Prostate gland (tissue), 2 donors: ENCODE measurements at regions of chr6 and their contacts with region 1.

Region 1: GRCh38 chr6:20291764-20292580 is 79.7 kb upstream of the MBOAT1 start:
- DNase-seq: peak; percentile 74
- H3K4me3 ChIP-seq: no peak overlapping the region
- H3K27ac ChIP-seq: no peak overlapping the region
- H3K4me1 ChIP-seq: no peaks in the 10 kb centered on the region
- H3K27me3 ChIP-seq: no peaks in the 10 kb centered on the region
- CTCF ChIP-seq: peak; percentile 79 to 88 (median 84)
- POLR2A ChIP-seq: no peak

Region 2: DNA sequence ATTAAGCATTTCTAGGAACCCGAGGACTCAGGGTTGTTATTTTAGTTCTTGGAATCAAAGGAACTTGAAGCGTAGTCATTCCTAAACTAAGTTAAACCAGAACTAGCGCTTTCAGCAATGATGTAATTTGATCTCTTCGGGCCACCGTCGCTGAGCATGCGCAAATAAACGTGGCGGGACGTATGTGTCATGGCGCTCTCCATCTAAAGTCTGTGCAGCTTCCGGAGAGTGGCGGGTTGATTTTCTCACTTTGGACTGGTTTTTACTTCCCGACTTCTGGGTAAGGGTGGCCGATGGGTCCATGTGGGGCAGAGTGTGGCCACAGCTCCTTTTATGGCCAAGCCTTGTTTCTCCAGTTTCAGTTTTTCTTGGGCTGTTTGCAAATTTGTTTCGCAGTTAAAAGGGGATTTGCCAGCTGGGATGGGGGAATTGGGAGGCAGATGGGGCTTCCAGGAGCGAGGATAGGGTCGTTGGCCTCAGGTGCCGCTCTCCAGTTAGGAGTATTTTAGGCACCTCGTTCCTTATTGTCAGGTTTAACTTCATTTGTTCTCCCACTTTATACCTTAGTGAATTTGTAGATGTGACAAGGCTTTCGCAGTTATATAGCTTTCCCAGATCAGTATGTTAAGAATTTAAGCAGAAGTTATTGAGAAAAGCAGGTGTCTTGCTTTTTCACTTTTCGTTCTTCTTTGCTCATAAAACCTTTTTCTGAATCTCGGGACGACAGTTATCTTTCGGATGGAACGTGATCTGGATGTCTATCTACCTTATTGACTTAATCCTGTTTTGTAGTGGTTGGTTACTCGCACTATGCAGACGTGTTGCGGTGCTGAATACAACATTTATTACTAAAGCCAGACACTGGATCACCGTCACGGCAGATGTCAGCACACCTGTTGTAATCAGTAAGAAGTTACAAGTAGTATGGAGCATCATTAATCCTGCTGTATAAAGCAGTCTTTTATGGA is 242.6 kb after region 1 on chr6 and contains the start of gene CDKAL1:
- intact Hi-C with region 1: loop called (anchors 2 kb)
- DNase-seq: peak; percentile 87
- H3K4me3 ChIP-seq: peak within 1 kb of the TSS; percentile 61 to 80
- H3K27ac ChIP-seq: peak within 1 kb of the TSS; percentile 69 to 86
- H3K4me1 ChIP-seq: no peaks in the 10 kb centered on the region
- H3K27me3 ChIP-seq: no peaks in the 10 kb centered on the region
- CTCF ChIP-seq: peak in 1 of 4 experiments; percentile 22
- POLR2A ChIP-seq: no peak
- total RNA-seq, gene CDKAL1: 12.1 to 19.0 TPM